Posterior cingulate gyrus (tissue), 11 donors: ENCODE measurements at regions of chr14 and their contacts with region 1.

Region 1: DNA sequence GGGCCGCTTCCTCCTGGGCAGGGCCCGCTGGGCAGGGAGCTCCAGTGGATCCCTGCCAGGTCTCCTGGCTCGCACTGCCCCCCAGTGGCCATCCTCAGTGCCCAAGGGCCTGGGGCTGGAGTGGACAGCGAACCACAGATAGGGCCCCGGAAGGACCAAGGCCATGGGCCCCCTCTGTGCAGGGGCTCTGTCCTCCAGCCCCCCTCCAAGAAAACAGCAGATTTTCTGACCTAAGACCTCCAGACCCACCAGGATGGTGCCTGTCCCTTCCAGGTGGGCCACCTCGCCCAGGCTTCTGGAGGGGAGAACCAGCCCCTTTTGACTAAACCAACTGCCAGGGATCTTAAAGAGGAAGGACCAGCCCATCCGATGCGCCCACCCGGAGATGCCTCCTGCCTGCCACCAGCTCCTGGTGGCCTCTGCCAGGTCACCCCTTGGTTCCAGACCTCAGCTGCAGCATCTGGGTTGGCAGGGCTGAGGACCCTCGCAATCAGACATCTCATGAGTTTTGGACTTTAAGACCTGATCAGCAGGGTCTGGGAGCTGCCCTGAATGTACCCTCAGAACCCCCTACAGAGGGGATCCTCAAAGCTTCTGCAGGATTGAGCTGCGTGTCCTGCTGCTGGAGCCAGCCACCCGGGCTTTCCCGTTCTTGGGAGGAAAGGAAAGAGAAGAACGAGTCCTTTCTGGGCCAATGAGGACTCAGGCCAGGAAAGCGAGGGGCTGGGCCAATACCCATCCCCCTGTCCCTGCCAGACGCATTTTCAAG is 325.8 kb upstream of the DIO3 start:
- DNase-seq: peak in 8 of 10 donors; percentile 61 to 93 (median 71)

Region 2: GRCh38 chr14:100383727-100384158 is 851.8 kb before region 1 on chr14:
- intact Hi-C with region 1: loop called (anchors 10 kb)
- DNase-seq: peak in 9 of 10 donors; percentile 52 to 95 (median 70)

Region 3: DNA sequence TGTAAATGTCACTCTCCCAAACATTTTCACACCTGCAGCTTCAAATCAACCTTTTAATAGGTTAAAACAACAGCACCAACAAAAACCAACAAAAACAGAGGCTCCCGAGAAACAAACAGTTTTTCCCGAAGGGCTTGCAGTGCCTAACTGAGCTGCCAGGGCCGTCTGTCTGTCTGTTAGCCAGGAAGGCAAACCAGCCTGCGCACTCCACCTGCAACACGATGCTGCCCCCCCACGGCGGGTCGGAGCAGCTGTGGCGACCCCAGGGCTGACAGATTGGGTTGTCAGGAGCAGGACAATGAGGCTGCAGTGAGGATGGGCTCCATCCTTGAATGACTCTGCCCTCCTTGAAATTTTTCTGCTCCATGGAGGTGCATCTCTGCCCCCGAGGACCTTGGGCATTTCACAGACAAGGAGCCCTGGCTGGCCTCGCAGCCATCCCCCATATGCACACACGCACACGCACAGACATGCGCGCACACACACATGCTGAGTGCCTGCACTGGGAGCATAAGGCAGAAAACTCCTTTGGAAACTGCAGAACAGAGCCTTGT is 334.6 kb before region 1 on chr14:
- intact Hi-C with region 1: loop called (anchors 10 kb)
- DNase-seq: peak in 5 of 10 donors; percentile 32 to 91 (median 41)

Region 4: DNA sequence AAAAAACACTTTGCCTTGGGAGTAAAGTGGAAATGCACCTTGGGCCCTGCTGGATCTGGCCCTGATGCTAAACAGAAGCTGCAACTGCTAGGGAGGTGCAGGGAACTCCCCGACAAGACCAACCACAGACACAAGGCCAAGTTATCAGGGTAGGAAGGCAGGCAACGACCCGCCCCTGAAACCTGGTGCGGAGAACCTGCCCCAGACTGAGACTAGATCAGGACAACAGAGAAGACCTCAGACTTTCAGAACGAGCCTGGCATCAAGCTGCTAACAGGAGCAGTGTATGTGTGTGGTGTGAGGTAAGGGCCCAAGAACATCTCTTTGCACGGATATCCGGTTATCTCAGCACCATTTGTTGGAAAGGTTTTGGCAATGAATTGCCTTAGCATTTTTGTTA is 98.3 kb before region 1 on chr14:
- intact Hi-C with region 1: no loop called
- DNase-seq: no peak